ENCODE measurements at regions of chr1 and their contacts with region 1.

Region 1: GRCh38 chr1:116826818-116827606 is 72.8 kb downstream of the CD2 start:
- DNase-seq: peak; percentile 75
- H3K4me3 Mint-ChIP-seq: peak overlapping the region; percentile 70
- H3K27ac Mint-ChIP-seq: peak overlapping the region; percentile 95
- H3K4me1 Mint-ChIP-seq: peaks cover 74% of the 10 kb centered on the region
- H3K27me3 Mint-ChIP-seq: no peaks in the 10 kb centered on the region

Region 2: GRCh38 chr1:116377541-116378529 is 449.2 kb before region 1 on chr1:
- intact Hi-C with region 1: loop called (anchors 5 kb)
- DNase-seq: peak; percentile 20
- H3K4me3 Mint-ChIP-seq: peak overlapping the region; percentile 85
- H3K27ac Mint-ChIP-seq: peak overlapping the region; percentile 85
- H3K4me1 Mint-ChIP-seq: peaks cover 77% of the 10 kb centered on the region
- H3K27me3 Mint-ChIP-seq: no peaks in the 10 kb centered on the region

Region 3: GRCh38 chr1:116754198-116754977 is 72.6 kb before region 1 on chr1 and contains the start of gene CD2:
- intact Hi-C with region 1: loop called (anchors 1 kb)
- DNase-seq: peak; percentile 61
- H3K4me3 Mint-ChIP-seq: peak within 1 kb of the TSS; percentile 97
- H3K27ac Mint-ChIP-seq: peak within 1 kb of the TSS; percentile 97
- H3K4me1 Mint-ChIP-seq: peaks cover 46% of the 10 kb centered on the region
- H3K27me3 Mint-ChIP-seq: no peaks in the 10 kb centered on the region
- total RNA-seq, gene CD2: 651 and 685 TPM in 2 replicates

Region 4: DNA sequence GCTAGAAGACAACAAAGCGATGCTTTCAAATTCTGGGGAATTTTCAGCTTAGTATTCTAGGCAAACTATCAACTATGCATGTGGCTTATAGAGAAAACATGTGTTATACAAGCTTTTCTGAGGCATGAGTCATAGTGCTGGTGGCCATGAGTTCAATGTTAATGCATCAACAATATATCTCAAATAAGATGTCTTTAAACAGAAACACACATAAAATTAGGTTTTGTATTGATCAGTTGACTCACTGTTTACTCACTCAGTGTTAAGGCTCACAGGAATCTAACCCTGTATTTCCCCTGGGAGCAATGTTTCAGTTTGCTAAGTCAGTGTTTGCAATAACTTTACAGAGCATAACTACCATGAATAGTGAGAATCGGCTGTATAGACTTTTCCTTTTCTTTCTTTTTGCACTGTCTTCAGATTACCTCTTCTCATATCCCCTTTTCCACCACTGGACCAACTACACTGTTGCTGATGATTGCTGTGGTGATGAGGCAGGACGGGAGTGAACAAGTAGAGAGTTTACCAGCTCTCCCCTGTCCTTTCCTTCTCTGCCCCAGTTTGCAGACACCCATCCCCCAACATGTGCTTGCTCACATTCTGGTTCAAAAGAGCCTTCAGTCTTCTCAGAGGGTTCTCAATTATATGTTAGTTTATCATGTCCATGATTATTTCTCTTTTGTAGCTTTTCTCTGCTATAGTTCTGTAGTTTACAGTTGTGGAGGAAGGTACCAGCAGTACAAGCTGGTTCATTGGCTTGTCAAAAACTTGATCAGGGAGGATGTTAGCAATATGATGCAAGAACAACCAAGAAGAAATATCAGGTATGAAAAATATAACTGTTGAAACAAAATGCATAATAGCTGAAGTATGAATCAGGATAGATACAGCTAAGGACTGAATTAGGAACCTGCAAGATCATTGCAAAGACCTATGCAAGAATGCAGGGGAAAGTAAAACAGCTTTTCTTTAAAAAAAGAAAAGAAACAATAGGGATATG is 48.9 kb before region 1 on chr1:
- intact Hi-C with region 1: no loop called
- DNase-seq: no peak
- H3K4me3 Mint-ChIP-seq: peak overlapping the region; percentile 54
- H3K27ac Mint-ChIP-seq: peak overlapping the region; percentile 83
- H3K4me1 Mint-ChIP-seq: peaks cover 37% of the 10 kb centered on the region
- H3K27me3 Mint-ChIP-seq: no peaks in the 10 kb centered on the region

Region 5: GRCh38 chr1:116806245-116806644 is 20.8 kb before region 1 on chr1:
- intact Hi-C with region 1: loop called (anchors 1 kb)
- DNase-seq: peak; percentile 40
- H3K4me3 Mint-ChIP-seq: peak overlapping the region; percentile 71
- H3K27ac Mint-ChIP-seq: peak overlapping the region; percentile 94
- H3K4me1 Mint-ChIP-seq: peaks cover 93% of the 10 kb centered on the region
- H3K27me3 Mint-ChIP-seq: no peaks in the 10 kb centered on the region

Region 6: DNA sequence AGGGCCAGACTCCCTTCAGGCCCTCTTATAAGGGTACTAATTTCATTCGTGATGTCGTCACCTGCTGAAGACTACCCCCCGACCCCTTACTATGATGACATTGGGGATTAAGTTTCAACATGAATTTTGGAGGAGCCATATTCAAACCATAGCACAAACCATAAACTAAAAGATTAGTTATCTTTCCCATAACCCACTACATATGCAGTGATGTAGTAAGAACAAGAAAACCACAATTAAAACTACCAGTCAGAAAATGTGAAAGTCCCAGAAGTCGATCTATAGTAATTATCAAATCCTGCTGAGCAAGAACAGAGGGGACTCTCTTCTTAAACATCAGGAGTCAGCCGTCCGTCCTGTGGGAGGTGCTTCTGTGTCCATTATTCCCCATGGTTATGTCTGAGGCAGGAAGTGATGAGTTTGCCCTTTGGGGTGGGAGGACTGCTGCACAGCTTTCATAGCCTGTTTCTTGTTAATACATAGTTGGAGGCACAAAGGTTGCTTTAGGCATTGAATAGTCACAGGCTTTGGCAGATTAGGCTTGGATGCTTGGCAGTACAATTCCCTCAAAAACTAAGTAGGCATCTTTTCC is 46.8 kb after region 1 on chr1:
- intact Hi-C with region 1: loop called (anchors 1 kb)
- DNase-seq: no peak
- H3K4me3 Mint-ChIP-seq: peak overlapping the region; percentile 3
- H3K27ac Mint-ChIP-seq: peak overlapping the region; percentile 13
- H3K4me1 Mint-ChIP-seq: peaks cover 19% of the 10 kb centered on the region
- H3K27me3 Mint-ChIP-seq: no peaks in the 10 kb centered on the region

Region 7: DNA sequence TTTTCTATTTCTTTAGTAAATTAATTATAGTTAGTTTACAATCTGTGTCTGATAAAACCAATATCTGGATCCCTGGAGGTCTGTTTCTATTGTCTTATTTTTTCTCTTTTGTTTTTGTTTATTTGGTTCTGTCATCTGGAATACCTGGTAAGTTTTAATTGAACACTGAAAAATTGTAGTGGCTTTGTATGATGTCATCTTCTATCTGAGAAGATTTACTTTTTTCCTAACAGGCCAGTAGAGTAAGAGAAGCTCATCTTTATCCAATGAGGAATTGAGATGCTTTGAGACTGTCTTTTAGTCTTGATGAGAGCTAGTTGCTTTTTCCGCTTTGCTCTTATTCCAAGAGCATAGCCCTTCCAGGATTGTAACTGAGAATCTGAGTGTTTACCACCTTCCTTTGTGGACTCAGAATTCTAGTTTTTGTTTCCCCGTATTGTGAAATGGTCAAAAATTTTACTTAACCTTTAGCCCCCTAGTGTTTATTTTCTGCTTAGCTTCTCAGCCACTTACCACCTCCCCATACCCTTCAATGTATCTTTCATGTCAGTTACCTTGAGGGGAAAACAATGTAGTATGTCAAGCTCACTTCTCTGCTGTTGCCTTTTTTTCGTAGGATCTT is 107.7 kb after region 1 on chr1:
- intact Hi-C with region 1: loop called (anchors 1 kb)
- DNase-seq: no peak
- H3K4me3 Mint-ChIP-seq: peak overlapping the region; percentile 25
- H3K27ac Mint-ChIP-seq: peak overlapping the region; percentile 75
- H3K4me1 Mint-ChIP-seq: peaks cover 27% of the 10 kb centered on the region
- H3K27me3 Mint-ChIP-seq: no peaks in the 10 kb centered on the region

Measured in activated T-helper 1 cell treated with anti-CD3 and anti-CD28 coated beads, Interleukin-12 subunit alpha, Interleukin-12 subunit beta, Interleukin-2, Interleukin-4 antibody, amounts not matched to agents 30 ng/mL and 10 ng/mL and 1 ng/mL, durations not matched to agents 14 hours and 24 hours and 36 hours (primary cell).